Spleen (tissue), 13 donors: ENCODE measurements at regions of chr11 and their contacts with region 1.

Region 1: GRCh38 chr11:116276051-116277044 is 496.4 kb downstream of the BUD13 start:
- DNase-seq: peak; percentile 91
- H3K4me3 ChIP-seq: peak overlapping the region in 2 of 8 donors; percentile 27 to 60
- H3K27ac ChIP-seq: no peak overlapping the region
- H3K4me1 ChIP-seq: peaks cover 0 to 7% (median 0%) of the 10 kb centered on the region in 6 donors
- H3K27me3 ChIP-seq: peaks cover 0 to 47% (median 4%) of the 10 kb centered on the region in 7 donors
- CTCF ChIP-seq: peak; percentile 13 to 95 (median 86)
- POLR2A ChIP-seq: no peak

Region 2: DNA sequence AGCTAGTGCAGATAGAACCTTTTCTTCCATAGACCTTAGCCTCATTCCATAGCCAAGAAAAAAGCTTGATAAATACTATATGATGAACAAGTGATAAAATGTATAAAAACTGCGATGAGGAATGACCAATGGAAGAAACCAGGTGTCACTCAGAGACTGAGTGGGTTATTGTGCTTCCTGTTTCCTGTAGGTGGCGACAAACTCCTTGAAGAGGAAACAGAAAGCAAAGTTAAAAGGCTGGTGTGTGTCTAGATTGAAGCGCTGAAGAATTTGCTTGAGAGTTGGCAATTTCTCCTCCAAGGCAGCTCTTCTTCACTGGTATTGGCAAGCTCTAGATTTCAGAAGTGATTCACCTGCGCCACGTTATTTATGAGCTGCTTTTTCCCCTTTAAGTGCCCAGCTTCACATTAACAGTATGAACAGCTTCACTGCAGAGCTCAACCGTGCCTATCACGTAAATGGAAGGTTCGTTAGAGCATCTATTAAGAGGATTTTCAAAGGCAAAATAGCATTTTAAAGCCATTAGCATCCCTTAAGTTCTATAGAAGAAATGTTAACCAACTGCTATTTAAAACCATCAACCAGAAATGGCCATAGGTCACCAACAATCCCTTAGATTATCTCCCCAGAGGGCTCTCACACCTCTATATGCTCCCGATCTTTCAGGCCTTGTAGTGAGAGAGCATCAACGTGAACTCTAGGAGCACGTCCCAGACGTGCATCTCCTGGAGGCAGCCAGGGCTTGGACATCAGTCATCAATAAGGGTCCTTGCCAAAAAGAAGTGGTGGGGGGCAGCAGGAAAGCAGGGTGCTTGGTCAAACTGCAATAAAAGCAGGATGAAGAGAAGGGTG is 951.5 kb before region 1 on chr11:
- intact Hi-C with region 1: loop called (anchors 10 kb)
- DNase-seq: no peak
- H3K4me3 ChIP-seq: peak overlapping the region in 1 of 8 donors; percentile 45
- H3K27ac ChIP-seq: no peak overlapping the region
- H3K4me1 ChIP-seq: peaks cover 0 to 6% (median 2%) of the 10 kb centered on the region in 6 donors
- H3K27me3 ChIP-seq: peaks cover 0 to 4% (median 0%) of the 10 kb centered on the region in 7 donors
- CTCF ChIP-seq: peak; percentile 48 to 80 (median 70)
- POLR2A ChIP-seq: no peak